Caco-2 (cell line): ENCODE measurements at regions of chr6 and their contacts with region 1.

Region 1: DNA sequence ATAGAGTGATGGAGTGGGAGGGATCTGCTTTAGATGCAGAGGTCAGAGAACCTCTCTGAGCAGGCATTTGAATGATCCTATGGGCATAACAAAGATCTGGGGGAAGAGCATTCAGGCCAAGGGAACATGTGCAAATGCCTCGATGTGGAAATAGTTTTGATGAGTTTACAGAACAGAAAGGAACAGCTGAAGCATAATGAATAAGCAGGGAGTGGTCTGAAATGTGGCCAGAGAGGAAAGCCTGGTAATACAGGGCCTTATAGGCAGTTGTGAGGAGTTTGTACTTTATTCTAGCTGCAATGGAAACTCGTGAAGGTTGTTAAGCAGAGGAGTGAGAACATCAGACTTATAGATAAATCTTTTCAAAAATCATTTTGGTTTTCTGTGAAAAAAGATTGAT is 33.0 kb upstream of the ME1 start:
- DNase-seq: peak in 1 of 2 experiments; percentile 16
- H3K4me3 ChIP-seq: no peak overlapping the region
- H3K4me3 Mint-ChIP-seq: peak overlapping the region; percentile 20
- H3K27ac Mint-ChIP-seq: peak overlapping the region; percentile 89
- H3K4me1 ChIP-seq: peaks cover 53% of the 10 kb centered on the region
- H3K4me1 Mint-ChIP-seq: peaks cover 48% of the 10 kb centered on the region
- H3K27me3 ChIP-seq: no peaks in the 10 kb centered on the region
- H3K27me3 Mint-ChIP-seq: no peaks in the 10 kb centered on the region
- CTCF ChIP-seq: no peak

Region 2: DNA sequence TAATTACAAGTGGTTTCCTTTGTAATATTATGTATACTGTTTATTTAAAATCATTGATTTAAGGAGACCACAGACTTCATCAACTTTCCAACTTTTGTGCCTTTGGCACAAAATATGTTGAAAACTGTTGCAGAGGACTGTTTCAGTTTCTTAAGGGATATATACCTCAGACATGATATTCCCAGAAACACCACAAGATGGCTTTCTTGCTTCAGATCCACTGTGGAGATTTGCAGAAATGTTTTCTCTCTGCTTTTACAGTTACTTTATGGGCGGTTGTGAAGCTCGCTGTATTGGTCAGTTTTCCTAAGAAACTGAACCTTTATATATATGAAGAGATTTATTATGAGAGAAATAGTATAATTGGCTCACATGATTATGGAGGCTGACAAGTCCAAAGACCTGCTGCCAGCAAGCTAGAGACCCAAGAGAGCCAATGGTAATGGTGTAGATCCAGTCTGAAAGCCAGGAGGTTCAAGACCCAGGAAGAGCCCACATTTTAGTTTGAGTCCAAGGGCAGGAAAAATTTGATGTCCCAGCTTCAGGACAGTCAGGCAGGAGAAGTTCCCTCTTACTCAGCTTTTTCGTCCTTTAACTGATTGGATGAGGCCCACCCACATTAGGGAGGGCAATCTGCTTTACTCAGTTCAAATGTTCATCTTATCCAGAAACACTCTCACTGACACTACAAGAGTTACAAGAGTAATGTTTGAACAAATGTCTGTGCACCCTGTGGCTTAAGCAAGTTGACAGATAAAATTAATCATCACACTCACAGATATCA is 45.8 kb before region 1 on chr6:
- CTCF ChIA-PET with region 1: interaction called, 9 read pairs
- POLR2A ChIA-PET with region 1: no interaction called
- intact Hi-C with region 1: loop called (anchors 1 kb)
- DNase-seq: peak in 1 of 2 experiments; percentile 63
- H3K4me3 ChIP-seq: no peak overlapping the region
- H3K4me3 Mint-ChIP-seq: no peak overlapping the region
- H3K27ac Mint-ChIP-seq: peak overlapping the region; percentile 5
- H3K4me1 ChIP-seq: peaks cover 33% of the 10 kb centered on the region
- H3K4me1 Mint-ChIP-seq: peaks cover 35% of the 10 kb centered on the region
- H3K27me3 ChIP-seq: no peaks in the 10 kb centered on the region
- H3K27me3 Mint-ChIP-seq: no peaks in the 10 kb centered on the region
- CTCF ChIP-seq: peak; percentile 63 to 75

Region 3: DNA sequence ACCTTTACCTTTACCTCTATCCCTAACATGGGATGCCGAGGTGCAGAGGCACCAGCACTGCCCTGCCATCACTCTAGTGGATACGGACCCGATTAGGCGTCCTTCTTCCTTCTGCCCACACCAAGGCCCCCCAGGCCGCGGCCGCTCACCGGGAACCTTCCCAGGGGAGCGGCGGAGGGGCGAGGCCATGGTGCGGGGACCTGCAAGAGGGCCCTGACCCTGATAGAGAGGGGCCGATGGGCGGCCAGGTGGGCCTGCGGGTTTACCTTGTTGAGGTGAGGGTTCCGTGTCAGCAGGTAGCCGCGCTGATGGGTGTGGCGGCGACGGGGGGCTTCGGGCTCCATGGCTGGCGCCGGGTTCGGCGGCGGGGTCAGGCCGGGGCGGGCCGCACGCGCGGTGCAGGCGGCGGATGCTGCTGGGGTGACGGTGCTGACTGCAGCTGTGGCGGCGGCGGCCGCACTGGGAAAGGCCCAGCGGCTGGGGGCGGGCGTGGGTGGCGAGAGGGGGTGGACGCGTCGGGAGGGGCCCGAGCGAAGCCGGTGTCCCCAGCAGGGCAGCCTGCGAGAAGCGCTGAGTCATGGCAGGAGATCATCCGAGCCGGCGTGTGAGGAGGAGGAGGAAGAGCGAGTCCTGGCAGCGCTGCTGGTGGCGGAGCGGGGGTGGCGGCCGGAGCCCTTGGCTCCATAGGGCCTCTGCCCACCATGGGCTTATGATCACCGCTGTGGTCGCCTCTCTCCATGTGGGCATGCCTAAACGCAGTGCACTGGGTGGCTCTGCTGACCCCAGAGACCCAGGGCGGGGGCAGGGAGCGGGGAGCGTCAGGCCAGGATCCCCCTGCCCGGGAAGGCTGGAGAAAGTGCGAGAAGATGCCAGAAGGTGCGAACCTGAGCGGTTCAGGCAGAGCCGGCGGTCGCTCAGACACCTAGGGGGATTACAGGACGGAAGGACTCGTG is 33.0 kb before region 1 on chr6 and contains the start of gene ME1:
- CTCF ChIA-PET with region 1: no interaction called
- POLR2A ChIA-PET with region 1: interaction called, 14 read pairs
- intact Hi-C with region 1: loop called (anchors 1 kb)
- DNase-seq: peak; percentile 91 to 94
- H3K4me3 ChIP-seq: peak within 1 kb of the TSS; percentile 79
- H3K4me3 Mint-ChIP-seq: peak within 1 kb of the TSS; percentile 100
- H3K27ac Mint-ChIP-seq: peak within 1 kb of the TSS; percentile 99
- H3K4me1 ChIP-seq: peaks cover 41% of the 10 kb centered on the region
- H3K4me1 Mint-ChIP-seq: peaks cover 25% of the 10 kb centered on the region
- H3K27me3 ChIP-seq: no peaks in the 10 kb centered on the region
- H3K27me3 Mint-ChIP-seq: no peaks in the 10 kb centered on the region
- CTCF ChIP-seq: no peak
- total RNA-seq, gene ME1: 121 and 131 TPM in 2 replicates

Region 4: DNA sequence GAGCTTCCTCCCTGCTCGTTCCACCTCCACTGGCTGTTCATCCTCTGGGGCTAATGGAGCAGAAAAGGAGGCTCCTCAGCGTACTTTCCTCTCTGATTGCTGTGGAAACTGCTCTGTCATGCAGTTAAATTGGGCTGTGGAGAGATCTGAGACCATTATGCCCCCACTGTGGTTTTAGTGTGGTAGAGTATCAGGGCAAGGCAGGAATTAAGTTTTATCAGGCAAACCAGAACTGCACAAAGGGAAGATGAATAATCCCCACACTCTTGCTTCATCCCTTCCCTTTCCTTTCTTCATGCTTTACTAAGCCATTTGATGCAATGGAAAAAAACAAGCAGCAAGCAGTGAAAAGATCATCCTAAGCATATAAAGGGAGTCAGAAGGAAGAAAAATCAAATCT is 21.1 kb before region 1 on chr6:
- CTCF ChIA-PET with region 1: no interaction called
- POLR2A ChIA-PET with region 1: no interaction called
- intact Hi-C with region 1: no loop called
- DNase-seq: no peak
- H3K4me3 ChIP-seq: no peak overlapping the region
- H3K4me3 Mint-ChIP-seq: no peak overlapping the region
- H3K27ac Mint-ChIP-seq: no peak overlapping the region
- H3K4me1 ChIP-seq: peaks cover 9% of the 10 kb centered on the region
- H3K4me1 Mint-ChIP-seq: peaks cover 7% of the 10 kb centered on the region
- H3K27me3 ChIP-seq: no peaks in the 10 kb centered on the region
- H3K27me3 Mint-ChIP-seq: no peaks in the 10 kb centered on the region
- CTCF ChIP-seq: no peak

Region 5: GRCh38 chr6:83488448-83488847 is 24.6 kb after region 1 on chr6:
- CTCF ChIA-PET with region 1: no interaction called
- POLR2A ChIA-PET with region 1: no interaction called
- intact Hi-C with region 1: loop called (anchors 2 kb)
- DNase-seq: no peak
- H3K4me3 ChIP-seq: no peak overlapping the region
- H3K4me3 Mint-ChIP-seq: no peak overlapping the region
- H3K27ac Mint-ChIP-seq: no peak overlapping the region
- H3K4me1 ChIP-seq: peaks cover 19% of the 10 kb centered on the region
- H3K4me1 Mint-ChIP-seq: peaks cover 20% of the 10 kb centered on the region
- H3K27me3 ChIP-seq: no peaks in the 10 kb centered on the region
- H3K27me3 Mint-ChIP-seq: no peaks in the 10 kb centered on the region
- CTCF ChIP-seq: no peak